ENCODE measurements at regions of chr6 and their contacts with region 1.

Region 1: GRCh38 chr6:16964553-16965501 is 137.0 kb upstream of the STMND1 start:
- DNase-seq: peak; percentile 31
- H3K4me3 ChIP-seq: no peak overlapping the region
- H3K27ac ChIP-seq: no peak overlapping the region
- H3K4me1 ChIP-seq: no peaks in the 10 kb centered on the region
- CTCF ChIP-seq: peak; percentile 80

Region 2: DNA sequence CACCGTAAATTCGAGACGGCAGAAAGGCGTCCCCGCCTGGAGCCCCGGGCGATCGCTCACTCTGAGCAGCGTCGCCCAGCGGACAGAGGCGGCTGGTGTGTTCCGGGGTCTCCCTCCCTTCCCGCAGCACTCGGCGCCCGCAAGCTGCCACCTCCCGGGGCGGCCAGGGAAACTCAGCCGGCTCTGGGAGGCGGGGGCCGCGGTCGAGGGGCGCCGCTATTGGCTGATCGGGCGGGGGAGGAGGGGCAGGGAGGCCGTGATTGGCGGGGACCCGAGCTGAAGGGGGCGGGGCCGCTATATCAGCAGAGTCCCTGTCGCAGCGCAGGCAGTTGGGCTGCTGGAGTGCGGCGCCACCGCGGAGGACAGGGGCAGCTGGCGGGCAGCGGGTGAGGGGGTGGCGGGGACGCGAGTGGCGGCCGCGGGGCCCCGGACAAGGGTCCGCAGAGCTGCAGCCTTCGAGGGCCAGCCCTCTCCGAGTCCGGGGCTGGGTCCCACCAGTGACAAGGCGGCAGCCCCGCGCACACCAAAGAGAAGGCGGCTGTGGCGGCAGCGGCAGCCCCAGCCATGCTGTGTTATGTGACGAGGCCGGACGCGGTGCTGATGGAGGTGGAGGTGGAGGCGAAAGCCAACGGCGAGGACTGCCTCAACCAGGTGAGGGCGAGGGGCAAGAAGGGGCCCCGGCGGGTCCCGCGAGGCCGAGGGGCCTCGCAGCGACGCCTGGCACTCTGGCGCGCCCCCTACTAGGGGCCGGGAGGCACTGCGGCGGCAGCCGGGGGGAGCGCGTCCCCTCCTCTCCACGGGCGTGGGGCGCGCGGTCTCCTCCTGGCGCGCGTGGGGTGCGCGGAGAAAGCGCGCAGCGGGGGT is 835.8 kb before region 1 on chr6 and contains the start of gene MYLIP:
- CTCF ChIA-PET with region 1: no interaction called
- POLR2A ChIA-PET with region 1: no interaction called
- intact Hi-C with region 1: no loop called
- DNase-seq: peak; percentile 95
- H3K4me3 ChIP-seq: peak within 1 kb of the TSS; percentile 99
- H3K27ac ChIP-seq: peak within 1 kb of the TSS; percentile 72
- H3K4me1 ChIP-seq: peaks cover 27% of the 10 kb centered on the region
- CTCF ChIP-seq: peak; percentile 74
- total RNA-seq, gene MYLIP: 8.5 and 12.4 TPM in 2 replicates

Region 3: DNA sequence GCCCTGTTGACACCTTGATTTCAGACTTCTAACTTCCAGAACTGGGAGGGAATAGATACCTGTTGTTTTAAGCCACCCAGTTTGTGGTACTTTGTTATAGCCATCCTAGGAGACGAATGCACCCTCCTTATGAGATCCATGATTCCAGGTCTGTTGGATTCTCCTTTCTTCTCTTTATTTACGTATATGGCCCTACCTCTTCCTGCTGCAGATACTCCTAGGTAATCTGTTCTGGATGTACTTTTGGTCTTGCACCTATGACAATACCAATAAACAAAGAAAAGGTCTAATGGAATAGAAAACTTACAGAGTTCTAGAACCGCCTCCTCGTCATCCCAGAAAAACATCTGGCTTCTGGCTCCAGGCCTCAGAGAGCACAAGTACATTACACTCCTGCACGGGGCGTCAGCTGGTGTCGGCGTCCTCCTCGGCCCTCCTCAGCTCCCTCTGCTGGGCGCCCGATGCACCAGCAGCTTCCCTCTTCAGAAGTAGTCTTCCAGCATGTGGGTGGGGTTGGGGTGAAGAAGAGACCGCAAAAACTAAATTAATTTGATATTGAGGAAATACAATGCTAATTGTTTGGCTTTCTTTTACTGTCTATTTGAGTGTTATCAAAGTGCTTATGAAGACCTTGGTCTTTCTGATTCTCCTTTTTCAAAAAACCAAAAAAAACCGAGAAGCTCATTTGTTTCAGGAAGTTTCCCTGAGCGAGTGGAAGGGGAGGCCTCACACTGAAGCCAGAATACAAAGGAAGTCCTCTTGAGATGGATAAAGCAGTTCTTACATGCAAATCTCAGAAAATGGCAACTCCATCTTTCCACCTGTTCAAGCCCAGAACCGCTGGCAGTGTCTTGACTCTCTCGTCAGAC is 193.9 kb before region 1 on chr6:
- CTCF ChIA-PET with region 1: no interaction called
- POLR2A ChIA-PET with region 1: no interaction called
- intact Hi-C with region 1: loop called (anchors 10 kb)
- DNase-seq: peak; percentile 52
- H3K4me3 ChIP-seq: no peak overlapping the region
- H3K27ac ChIP-seq: no peak overlapping the region
- H3K4me1 ChIP-seq: no peaks in the 10 kb centered on the region
- CTCF ChIP-seq: peak; percentile 86

Measured in OCI-LY7 (cell line).